Activated CD8-positive, alpha-beta T cell treated with anti-CD3 and anti-CD28 coated beads for 36 hours (primary cell): ENCODE measurements at regions of chr16 and their contacts with region 1.

Region 1: GRCh38 chr16:30534368-30535105 is at the start of gene ZNF747:
- DNase-seq: peak; percentile 94
- ATAC-seq: peak; percentile 83
- H3K4me3 Mint-ChIP-seq: peak within 1 kb of the TSS; percentile 86
- H3K27ac Mint-ChIP-seq: peak within 1 kb of the TSS; percentile 99
- H3K4me1 Mint-ChIP-seq: peaks cover 40% of the 10 kb centered on the region
- H3K27me3 Mint-ChIP-seq: no peaks in the 10 kb centered on the region
- CTCF ChIP-seq: no peak
- total RNA-seq, gene ZNF747: 6.7 to 7.9 TPM

Region 2: DNA sequence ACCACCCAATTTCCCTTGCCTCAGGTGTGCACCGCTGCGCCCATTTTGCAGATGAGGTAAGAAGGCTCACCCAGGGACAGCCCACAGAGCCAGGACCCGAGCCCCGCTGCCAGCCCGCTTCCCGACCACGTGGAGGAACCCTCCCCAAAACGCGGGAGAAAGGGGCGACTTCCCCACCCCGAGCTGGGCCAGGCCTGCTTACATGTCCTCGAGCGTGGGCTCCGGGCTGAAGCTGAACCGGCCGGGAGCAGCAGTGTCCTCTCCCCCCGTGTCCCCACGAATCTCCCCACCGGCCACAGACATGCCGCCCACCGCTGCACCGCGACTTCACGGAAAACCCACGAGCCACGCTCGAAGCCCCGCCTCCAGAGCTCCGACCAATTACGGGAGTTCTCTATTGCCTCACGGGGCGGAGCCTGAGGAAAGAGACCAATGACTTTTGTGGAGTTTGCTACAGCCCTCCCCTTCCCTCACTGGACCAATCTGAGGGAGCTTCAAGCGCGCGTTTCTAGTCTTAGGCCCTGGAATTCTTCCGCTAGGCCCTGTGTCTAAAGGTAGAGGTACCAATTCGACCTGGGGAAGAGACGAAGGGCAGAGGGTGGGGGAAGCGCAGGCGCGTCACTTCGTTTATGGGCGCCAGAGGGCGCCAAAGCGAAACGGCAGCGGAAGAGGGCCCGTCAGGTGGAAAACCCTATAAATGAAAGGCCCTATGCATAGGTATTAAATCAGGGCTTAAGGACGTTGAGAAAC is 104.7 kb before region 1 on chr16 and contains the start of gene DCTPP1:
- CTCF ChIA-PET with region 1: interaction called, 26 read pairs
- POLR2A ChIA-PET with region 1: interaction called, 4 read pairs
- intact Hi-C with region 1: no loop called
- DNase-seq: peak; percentile 98
- ATAC-seq: peak; percentile 97
- H3K4me3 Mint-ChIP-seq: no peak within 1 kb of the TSS
- H3K27ac Mint-ChIP-seq: no peak within 1 kb of the TSS
- H3K4me1 Mint-ChIP-seq: peaks cover 34% of the 10 kb centered on the region
- H3K27me3 Mint-ChIP-seq: no peaks in the 10 kb centered on the region
- CTCF ChIP-seq: peak; percentile 69
- total RNA-seq, gene DCTPP1: 98.4 to 105 TPM

Region 3: GRCh38 chr16:30458561-30459394 is 75.8 kb before region 1 on chr16:
- CTCF ChIA-PET with region 1: interaction called, 17 read pairs
- POLR2A ChIA-PET with region 1: interaction called, 3 read pairs
- intact Hi-C with region 1: no loop called
- DNase-seq: peak; percentile 97
- ATAC-seq: peak; percentile 95
- H3K4me3 Mint-ChIP-seq: peak overlapping the region; percentile 62
- H3K27ac Mint-ChIP-seq: peak overlapping the region; percentile 98
- H3K4me1 Mint-ChIP-seq: peaks cover 67% of the 10 kb centered on the region
- H3K27me3 Mint-ChIP-seq: no peaks in the 10 kb centered on the region
- CTCF ChIP-seq: no peak

Region 4: GRCh38 chr16:30546115-30546514 is 11.6 kb after region 1 on chr16:
- CTCF ChIA-PET with region 1: interaction called, 8 read pairs
- POLR2A ChIA-PET with region 1: interaction called, 29 read pairs
- intact Hi-C with region 1: no loop called
- DNase-seq: no peak
- ATAC-seq: no peak
- H3K4me3 Mint-ChIP-seq: no peak overlapping the region
- H3K27ac Mint-ChIP-seq: no peak overlapping the region
- H3K4me1 Mint-ChIP-seq: peaks cover 17% of the 10 kb centered on the region
- H3K27me3 Mint-ChIP-seq: no peaks in the 10 kb centered on the region
- CTCF ChIP-seq: no peak

Region 5: DNA sequence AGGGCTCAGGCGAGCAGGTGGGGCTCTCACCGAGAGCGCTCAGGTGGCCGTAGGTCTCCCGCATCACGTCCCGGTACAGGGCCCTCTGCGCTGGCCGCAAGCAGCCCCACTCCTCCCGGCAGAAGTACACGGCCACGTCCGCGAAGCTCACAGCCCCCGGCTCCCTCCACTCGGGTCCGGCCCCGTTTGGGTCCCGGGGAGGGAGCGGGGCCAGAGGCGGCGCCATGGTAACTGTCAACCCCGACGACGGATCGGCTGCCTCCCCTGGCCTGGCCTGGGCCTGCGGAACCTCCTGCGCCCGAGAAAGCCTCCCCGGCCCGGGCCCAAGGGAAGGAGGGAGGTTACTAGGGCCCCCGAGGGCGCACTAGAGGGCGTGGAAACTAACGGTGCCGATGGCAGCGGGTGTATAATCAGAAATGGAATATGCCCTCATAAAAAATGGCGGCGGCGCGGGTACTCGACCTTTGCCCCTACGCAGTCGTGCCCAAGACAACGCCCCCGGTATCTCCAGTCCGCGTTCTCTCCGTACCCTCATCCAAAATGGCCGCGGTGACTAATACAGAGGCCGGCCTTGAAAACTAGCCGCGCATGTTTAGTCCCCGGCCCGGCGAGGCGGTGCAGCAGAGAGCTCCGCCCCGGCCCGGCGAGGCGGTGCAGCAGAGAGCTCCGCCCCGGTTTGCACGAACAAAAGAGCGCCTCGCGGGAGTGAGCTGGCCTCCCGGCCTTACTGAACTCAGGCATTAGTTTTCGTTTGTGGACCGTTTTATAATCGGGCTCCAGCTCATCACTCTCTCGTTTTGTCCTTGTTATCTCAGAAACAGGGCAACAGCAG is 23.6 kb after region 1 on chr16 and contains the start of gene ZNF764:
- CTCF ChIA-PET with region 1: interaction called, 18 read pairs
- POLR2A ChIA-PET with region 1: interaction called, 42 read pairs
- intact Hi-C with region 1: loop called (anchors 1 kb)
- DNase-seq: peak; percentile 99
- ATAC-seq: peak; percentile 96
- H3K4me3 Mint-ChIP-seq: peak within 1 kb of the TSS; percentile 88
- H3K27ac Mint-ChIP-seq: peak within 1 kb of the TSS; percentile 94
- H3K4me1 Mint-ChIP-seq: peaks cover 41% of the 10 kb centered on the region
- H3K27me3 Mint-ChIP-seq: no peaks in the 10 kb centered on the region
- CTCF ChIP-seq: no peak
- total RNA-seq, gene ZNF764: 9.7 to 10.4 TPM

Region 6: DNA sequence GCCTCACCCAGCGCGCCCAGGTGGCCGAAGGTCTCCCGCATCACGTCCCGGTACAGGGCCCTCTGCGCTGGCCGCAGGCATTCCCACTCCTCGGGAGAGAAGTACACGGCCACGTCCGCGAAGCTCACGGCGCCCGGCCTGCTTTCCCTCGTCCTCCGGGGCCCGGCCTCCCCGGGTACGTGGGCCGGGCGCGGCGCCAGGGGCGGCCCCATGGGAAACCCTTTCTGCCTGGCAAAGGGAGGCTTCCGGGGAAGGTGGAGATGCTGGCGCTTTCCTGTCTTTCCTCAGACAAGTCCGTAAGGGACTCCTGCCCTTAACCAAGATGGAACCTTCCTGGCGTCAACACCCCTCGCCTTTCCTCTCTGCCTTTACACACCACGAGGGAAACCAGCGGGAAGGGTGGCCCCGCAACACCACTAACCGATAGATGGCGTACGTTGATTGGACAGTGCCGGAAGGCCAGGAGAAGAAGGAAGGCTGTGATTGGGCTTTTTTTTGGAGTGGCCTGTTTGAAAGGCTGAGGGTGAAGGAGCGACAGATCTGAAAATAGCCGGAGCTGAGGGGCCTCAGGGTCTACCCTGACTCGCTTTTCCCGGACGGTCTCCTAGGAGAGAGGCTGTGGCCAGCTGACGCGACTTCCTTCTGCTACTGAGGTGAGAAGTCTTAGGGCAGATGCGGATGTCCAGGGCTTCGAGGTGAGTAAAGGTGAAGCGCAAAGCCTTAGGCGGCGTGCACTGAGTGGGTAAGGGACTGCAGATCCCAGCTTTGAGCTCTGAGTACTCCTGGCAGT is 51.1 kb after region 1 on chr16 and contains the start of gene ZNF785:
- CTCF ChIA-PET with region 1: interaction called, 14 read pairs
- POLR2A ChIA-PET with region 1: interaction called, 30 read pairs
- intact Hi-C with region 1: no loop called
- DNase-seq: peak; percentile 97
- ATAC-seq: peak; percentile 98
- H3K4me3 Mint-ChIP-seq: peak within 1 kb of the TSS; percentile 91
- H3K27ac Mint-ChIP-seq: peak within 1 kb of the TSS; percentile 88
- H3K4me1 Mint-ChIP-seq: peaks cover 25% of the 10 kb centered on the region
- H3K27me3 Mint-ChIP-seq: no peaks in the 10 kb centered on the region
- CTCF ChIP-seq: no peak
- total RNA-seq, gene ZNF785: 8.8 to 10.3 TPM

Region 7: DNA sequence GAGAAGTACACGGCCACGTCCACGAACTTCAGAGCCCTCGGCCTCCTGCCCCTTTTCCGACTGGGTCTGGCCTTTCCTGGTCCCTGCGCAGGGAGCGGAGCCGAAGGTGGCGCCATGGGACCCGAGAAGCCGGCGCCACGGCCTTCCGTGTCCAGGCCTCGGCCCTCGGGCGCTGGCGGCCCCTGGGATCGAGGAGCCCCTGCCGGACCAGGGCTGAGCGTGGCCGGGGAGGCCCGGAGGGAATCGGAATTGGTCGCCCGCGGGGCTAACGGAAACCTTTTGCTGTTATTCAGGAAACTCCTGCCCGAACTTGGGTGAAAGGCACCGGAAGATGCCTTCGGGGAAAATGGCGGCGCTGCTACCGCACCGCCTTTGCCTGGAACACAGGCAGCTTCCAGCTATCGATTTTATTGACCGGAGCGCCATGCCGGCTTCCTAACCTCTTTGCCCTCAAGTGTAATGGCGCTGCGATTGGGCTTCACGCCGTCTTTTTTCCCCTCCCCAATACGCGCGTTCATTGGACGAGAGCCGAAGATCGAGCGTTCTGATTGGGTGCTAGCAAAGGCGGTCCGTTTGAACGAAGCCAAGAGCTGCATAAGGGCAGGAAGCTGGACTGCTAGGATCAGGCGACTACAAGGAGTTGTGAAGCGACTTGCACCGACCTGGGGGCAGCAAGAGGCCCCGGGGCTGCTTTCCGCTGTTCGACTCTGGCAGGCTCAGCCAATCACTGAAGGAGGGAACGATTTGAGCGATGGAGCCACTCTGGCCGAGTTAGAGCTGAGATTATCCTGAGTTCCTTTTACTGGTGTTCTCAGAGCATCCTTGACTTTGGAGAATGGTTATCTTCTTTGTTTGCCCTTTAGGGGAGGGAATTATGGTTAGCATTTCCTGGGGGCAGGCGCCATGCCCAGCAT is 75.6 kb after region 1 on chr16 and contains the start of gene ZNF689:
- CTCF ChIA-PET with region 1: interaction called, 14 read pairs
- POLR2A ChIA-PET with region 1: interaction called, 11 read pairs
- intact Hi-C with region 1: no loop called
- DNase-seq: peak; percentile 96
- ATAC-seq: peak; percentile 86
- H3K4me3 Mint-ChIP-seq: peak within 1 kb of the TSS; percentile 89
- H3K27ac Mint-ChIP-seq: peak within 1 kb of the TSS; percentile 93
- H3K4me1 Mint-ChIP-seq: peaks cover 15% of the 10 kb centered on the region
- H3K27me3 Mint-ChIP-seq: no peaks in the 10 kb centered on the region
- CTCF ChIP-seq: no peak
- total RNA-seq, gene ZNF689: 9.8 to 11.3 TPM